ENCODE measurements at regions of chr16 and their contacts with region 1.

Region 1: GRCh38 chr16:75319513-75320411 is 68.3 kb upstream of the BCAR1 start:
- DNase-seq: no peak
- H3K4me3 Mint-ChIP-seq: peak overlapping the region; percentile 7
- H3K27ac Mint-ChIP-seq: no peak overlapping the region
- H3K4me1 Mint-ChIP-seq: peaks cover 27% of the 10 kb centered on the region
- H3K27me3 Mint-ChIP-seq: peaks cover 35% of the 10 kb centered on the region

Region 2: GRCh38 chr16:74793571-74793970 is 526.2 kb before region 1 on chr16:
- intact Hi-C with region 1: no loop called
- DNase-seq: no peak
- H3K4me3 Mint-ChIP-seq: no peak overlapping the region
- H3K27ac Mint-ChIP-seq: no peak overlapping the region
- H3K4me1 Mint-ChIP-seq: no peaks in the 10 kb centered on the region
- H3K27me3 Mint-ChIP-seq: peaks cover 12% of the 10 kb centered on the region

Region 3: GRCh38 chr16:75379911-75380847 is 60.4 kb after region 1 on chr16:
- intact Hi-C with region 1: loop called (anchors 1 kb)
- DNase-seq: peak; percentile 45
- H3K4me3 Mint-ChIP-seq: peak overlapping the region; percentile 38
- H3K27ac Mint-ChIP-seq: peak overlapping the region; percentile 50
- H3K4me1 Mint-ChIP-seq: peaks cover 38% of the 10 kb centered on the region
- H3K27me3 Mint-ChIP-seq: peaks cover 46% of the 10 kb centered on the region

Region 4: DNA sequence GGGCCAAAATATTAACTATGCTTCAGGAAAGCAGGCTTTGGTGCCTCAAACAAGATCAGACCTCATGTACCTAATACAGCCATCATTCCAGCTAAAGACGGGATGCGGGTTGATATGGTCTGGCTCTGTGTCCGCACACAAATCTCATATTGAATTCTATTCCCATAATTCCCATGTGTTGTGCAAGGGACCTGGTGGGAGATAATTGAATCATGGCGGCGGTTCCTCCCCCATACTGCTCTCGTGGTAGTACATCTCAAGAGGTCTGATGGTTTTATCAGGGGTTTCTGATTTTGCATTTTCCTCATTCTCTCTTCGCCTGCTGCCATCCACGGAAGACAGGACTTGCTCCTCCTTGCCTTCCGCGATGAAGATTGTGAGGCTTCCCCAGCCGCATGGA is 194.5 kb after region 1 on chr16:
- intact Hi-C with region 1: no loop called
- DNase-seq: no peak
- H3K4me3 Mint-ChIP-seq: no peak overlapping the region
- H3K27ac Mint-ChIP-seq: no peak overlapping the region
- H3K4me1 Mint-ChIP-seq: peaks cover 7% of the 10 kb centered on the region
- H3K27me3 Mint-ChIP-seq: peaks cover 4% of the 10 kb centered on the region

Measured in activated T-helper 2 cell treated with anti-CD3 and anti-CD28 coated beads, Interferon-gamma antibody, Interleukin-2, Interleukin-4, amounts not matched to agents 10 μg/mL and 5 μg/mL and 100 μg/mL, durations not matched to agents 14 hours and 24 hours and 36 hours (primary cell).